Activated CD8-positive, alpha-beta memory T cell treated with anti-CD3 and anti-CD28 coated beads, Interleukin-2, amount 10 ng/mL, durations not matched to agents 7 days and 5 days (primary cell): ENCODE measurements at regions of chr12 and their contacts with region 1.

Region 1: GRCh38 chr12:53984901-53985709 is at the start of gene HOXC10:
- DNase-seq: peak; percentile 89
- ATAC-seq: peak; percentile 67
- H3K4me3 Mint-ChIP-seq: no peak within 1 kb of the TSS
- H3K27ac Mint-ChIP-seq: peak within 1 kb of the TSS; percentile 28
- H3K4me1 Mint-ChIP-seq: peaks cover 24% of the 10 kb centered on the region
- H3K27me3 Mint-ChIP-seq: peaks cover 97% of the 10 kb centered on the region
- total RNA-seq, gene HOXC10: not detected

Region 2: GRCh38 chr12:53775478-53776145 is 209.5 kb before region 1 on chr12:
- CTCF ChIA-PET with region 1: no interaction called
- DNase-seq: no peak
- ATAC-seq: no peak
- H3K4me3 Mint-ChIP-seq: no peak overlapping the region
- H3K27ac Mint-ChIP-seq: no peak overlapping the region
- H3K4me1 Mint-ChIP-seq: no peaks in the 10 kb centered on the region
- H3K27me3 Mint-ChIP-seq: peaks cover 44% of the 10 kb centered on the region

Region 3: DNA sequence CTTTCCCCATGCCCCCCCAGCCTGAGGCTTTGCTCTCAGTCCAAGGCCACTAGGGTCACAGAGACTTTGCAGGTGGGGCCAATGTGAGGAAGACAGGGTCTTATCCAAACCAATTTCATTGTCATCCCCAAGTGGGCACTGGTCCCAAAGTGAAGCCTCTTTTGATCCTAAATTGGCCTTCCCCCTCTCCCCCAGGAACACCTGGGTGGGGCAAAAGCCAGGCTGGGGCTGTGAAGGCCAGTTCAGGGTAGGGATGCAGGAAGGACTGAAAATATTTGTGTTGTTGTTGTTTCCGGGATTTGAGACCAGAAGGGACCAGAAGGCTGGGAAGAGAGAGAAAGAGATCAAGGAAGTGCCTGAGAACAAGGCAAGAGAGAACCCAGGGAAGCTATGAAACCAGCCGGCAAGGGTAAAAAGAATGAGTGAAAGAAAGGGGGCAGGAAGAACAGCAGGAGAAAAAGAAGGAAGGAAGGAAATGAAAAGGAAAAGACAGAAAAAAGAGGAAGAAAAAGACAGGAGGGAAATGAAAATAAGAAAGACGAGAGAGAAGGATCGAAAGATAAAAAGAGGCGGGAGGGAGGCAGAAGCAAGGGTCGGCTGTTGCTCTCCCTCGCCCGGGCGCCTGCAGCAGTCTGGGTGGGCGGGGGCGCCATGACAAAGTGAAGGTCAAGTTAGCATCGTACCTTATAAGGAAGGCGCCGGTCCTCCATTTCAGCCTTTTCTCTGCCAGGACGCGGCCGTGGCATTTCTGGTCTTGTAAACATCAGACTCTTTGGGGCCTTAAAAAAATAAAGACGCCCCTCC is 19.6 kb before region 1 on chr12:
- CTCF ChIA-PET with region 1: interaction called, 10 read pairs
- DNase-seq: no peak
- ATAC-seq: no peak
- H3K4me3 Mint-ChIP-seq: peak overlapping the region; percentile 5
- H3K27ac Mint-ChIP-seq: no peak overlapping the region
- H3K4me1 Mint-ChIP-seq: peaks cover 13% of the 10 kb centered on the region
- H3K27me3 Mint-ChIP-seq: peaks cover 98% of the 10 kb centered on the region

Region 4: DNA sequence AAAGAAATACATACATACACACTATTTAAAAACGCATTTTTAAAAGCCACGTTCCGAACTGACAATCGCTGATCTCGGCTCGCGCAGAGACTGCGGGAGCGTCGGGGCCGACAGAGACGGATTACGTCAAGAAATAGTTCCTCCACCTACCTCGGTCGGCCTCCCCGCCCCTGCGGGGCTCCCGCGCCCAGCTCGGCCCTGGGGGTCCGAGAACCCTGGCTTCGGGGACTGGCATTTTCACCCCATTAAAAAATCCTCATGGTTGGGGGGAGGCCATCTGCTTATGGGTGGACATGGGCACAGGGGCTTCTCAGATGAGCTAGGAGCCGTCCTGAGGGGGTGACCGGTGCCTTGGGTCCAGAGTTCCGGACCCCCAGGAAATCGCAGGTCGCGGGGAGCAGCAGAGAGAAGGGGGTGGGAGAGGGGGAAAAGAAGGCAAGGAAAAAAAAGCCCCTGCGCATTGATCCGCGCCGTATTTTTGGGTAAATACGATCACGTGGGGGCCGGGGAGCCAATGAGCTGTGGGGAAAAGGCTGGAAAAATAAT is 14.5 kb after region 1 on chr12:
- CTCF ChIA-PET with region 1: interaction called, 41 read pairs
- DNase-seq: no peak
- ATAC-seq: no peak
- H3K4me3 Mint-ChIP-seq: peak overlapping the region; percentile 42
- H3K27ac Mint-ChIP-seq: no peak overlapping the region
- H3K4me1 Mint-ChIP-seq: peaks cover 14% of the 10 kb centered on the region
- H3K27me3 Mint-ChIP-seq: peaks cover 97% of the 10 kb centered on the region

Region 5: GRCh38 chr12:54017878-54018467 is 32.9 kb after region 1 on chr12:
- CTCF ChIA-PET with region 1: interaction called, 10 read pairs
- DNase-seq: peak; percentile 87
- ATAC-seq: peak; percentile 96
- H3K4me3 Mint-ChIP-seq: peak overlapping the region; percentile 74
- H3K27ac Mint-ChIP-seq: peak overlapping the region; percentile 58
- H3K4me1 Mint-ChIP-seq: peaks cover 15% of the 10 kb centered on the region
- H3K27me3 Mint-ChIP-seq: peaks cover 81% of the 10 kb centered on the region

Region 6: GRCh38 chr12:54207484-54208294 is 222.6 kb after region 1 on chr12:
- CTCF ChIA-PET with region 1: interaction called, 40 read pairs
- DNase-seq: peak; percentile 87
- ATAC-seq: peak; percentile 92
- H3K4me3 Mint-ChIP-seq: no peak overlapping the region
- H3K27ac Mint-ChIP-seq: no peak overlapping the region
- H3K4me1 Mint-ChIP-seq: peaks cover 2% of the 10 kb centered on the region
- H3K27me3 Mint-ChIP-seq: peaks cover 34% of the 10 kb centered on the region